Posterior vena cava (tissue), 2 donors: ENCODE measurements at regions of chr9 and their contacts with region 1.

Region 1: GRCh38 chr9:116959809-116960208 is 272.7 kb downstream of the TRIM32 start:
- DNase-seq: no peak

Region 2: DNA sequence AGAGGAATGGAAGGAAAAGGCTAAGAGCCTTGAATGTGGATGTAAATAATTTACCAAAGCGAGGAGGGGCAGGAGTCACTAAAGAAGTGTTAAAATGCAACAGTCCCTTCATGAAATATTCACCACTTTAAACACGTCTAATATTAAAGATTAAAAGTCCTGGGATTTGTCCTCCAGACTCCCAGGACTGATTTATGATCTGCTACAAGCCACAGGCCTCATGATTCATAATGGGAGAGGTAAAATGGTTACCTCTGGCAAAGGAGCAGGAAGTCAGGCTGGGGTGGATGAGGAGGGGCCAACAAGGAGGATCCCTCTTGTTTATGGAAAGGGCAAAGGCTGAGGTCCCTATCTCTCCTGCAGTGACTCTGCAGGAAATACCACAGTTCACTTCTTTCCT is 19.6 kb after region 1 on chr9:
- intact Hi-C with region 1: loop called in 1 of 2 experiments (anchors 1 kb)
- DNase-seq: no peak

Region 3: DNA sequence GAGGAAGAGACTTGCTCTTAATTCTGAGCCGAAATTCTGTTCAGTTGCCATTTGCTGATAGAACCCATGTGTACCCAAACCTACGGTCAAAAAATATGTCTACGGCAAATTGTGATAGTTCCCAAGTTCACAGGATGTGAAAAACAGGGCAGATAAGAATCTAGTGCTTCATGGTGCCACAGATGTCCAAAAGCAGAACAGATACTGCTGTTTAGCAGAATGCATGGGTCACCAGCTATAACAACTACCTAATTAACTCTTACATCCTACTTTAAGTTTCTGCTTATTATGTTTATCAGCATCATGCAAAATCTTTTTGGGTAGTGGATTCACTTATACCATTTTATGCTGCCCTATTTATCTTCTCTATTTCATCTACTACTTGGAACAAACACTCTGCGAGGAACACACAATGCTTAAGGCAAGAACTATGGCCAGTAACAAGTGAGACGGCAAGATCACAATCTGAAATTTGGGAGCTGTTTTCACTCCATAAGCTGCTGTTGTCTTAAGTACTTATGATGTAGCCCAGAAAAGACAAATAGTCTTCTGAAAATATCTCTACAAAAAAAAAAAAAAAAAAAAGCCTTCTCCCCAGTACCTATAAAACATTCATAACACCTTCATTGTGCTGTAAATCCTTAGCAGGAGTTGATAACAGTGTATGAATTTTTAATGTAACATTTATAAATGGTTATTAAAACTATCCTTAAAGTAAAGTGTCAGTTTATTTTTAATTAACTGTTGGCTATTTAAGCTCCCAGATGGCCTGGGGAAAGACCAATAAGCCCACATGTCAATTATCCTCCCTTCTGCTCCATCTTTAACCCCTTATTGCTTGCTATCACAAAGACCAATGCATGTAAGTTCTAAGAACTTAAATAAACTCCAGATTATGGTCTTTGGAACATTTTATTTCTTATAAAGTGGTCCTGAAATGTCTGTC is 976.6 kb after region 1 on chr9:
- intact Hi-C with region 1: no loop called
- DNase-seq: no peak